K562 (cell line): ENCODE measurements at regions of chr3 and their contacts with region 1.

Region 1: GRCh38 chr3:44913868-44914468 is 39.6 kb downstream of the TGM4 start:
- DNase-seq: peak; percentile 81 to 85 (median 82)
- ATAC-seq: peak; percentile 93
- H3K4me3 ChIP-seq: no peak overlapping the region
- H3K27ac ChIP-seq: no peak overlapping the region
- H3K4me1 ChIP-seq: no peaks in the 10 kb centered on the region
- H3K27me3 ChIP-seq: peaks cover 0 to 5% of the 10 kb centered on the region in 2 experiments; a peak in 1 of 5 replicates
- CTCF ChIP-seq: peak; percentile 88 to 92 (median 90)
- EP300 ChIP-seq: no peak
- POLR2A ChIP-seq: no peak
- RAD21 ChIP-seq: peak; percentile 51 to 87

Region 2: GRCh38 chr3:44529927-44530326 is 384.0 kb before region 1 on chr3:
- CTCF ChIA-PET with region 1: interaction called, 5 read pairs
- POLR2A ChIA-PET with region 1: interaction called, 3 read pairs
- in situ Hi-C with region 1: no loop called
- intact Hi-C with region 1: loop called (anchors 1 kb)
- DNase-seq: peak in 1 of 4 experiments; percentile 37
- ATAC-seq: peak; percentile 76
- H3K4me3 ChIP-seq: no peak overlapping the region
- H3K27ac ChIP-seq: no peak overlapping the region
- H3K4me1 ChIP-seq: peaks cover 0 to 3% of the 10 kb centered on the region in 2 experiments; a peak in 1 of 5 replicates
- H3K27me3 ChIP-seq: peaks cover 0 to 8% of the 10 kb centered on the region in 2 experiments; a peak in 2 of 5 replicates
- CTCF ChIP-seq: peak; percentile 33 to 48 (median 43); a peak in 4 of 6 replicates
- EP300 ChIP-seq: no peak
- POLR2A ChIP-seq: no peak
- RAD21 ChIP-seq: peak in 1 of 2 experiments; percentile 34; a peak in 2 of 4 replicates

Region 3: GRCh38 chr3:44992555-44993470 is 78.8 kb after region 1 on chr3:
- CTCF ChIA-PET with region 1: no interaction called
- POLR2A ChIA-PET with region 1: no interaction called
- in situ Hi-C with region 1: no loop called
- intact Hi-C with region 1: loop called (anchors 1 kb)
- DNase-seq: peak; percentile 62 to 67 (median 64)
- ATAC-seq: peak; percentile 91
- H3K4me3 ChIP-seq: no peak overlapping the region
- H3K27ac ChIP-seq: no peak overlapping the region
- H3K4me1 ChIP-seq: no peaks in the 10 kb centered on the region; a peak in 1 of 5 replicates
- H3K27me3 ChIP-seq: no peaks in the 10 kb centered on the region
- CTCF ChIP-seq: peak; percentile 85 to 98 (median 90)
- EP300 ChIP-seq: no peak
- POLR2A ChIP-seq: no peak
- RAD21 ChIP-seq: peak; percentile 44 to 50

Region 4: GRCh38 chr3:45021148-45021923 is 107.4 kb after region 1 on chr3:
- CTCF ChIA-PET with region 1: no interaction called
- POLR2A ChIA-PET with region 1: no interaction called
- in situ Hi-C with region 1: no loop called
- intact Hi-C with region 1: loop called (anchors 5 kb)
- DNase-seq: no peak
- ATAC-seq: peak; percentile 42; the same call in 1 of the 3 replicates
- H3K4me3 ChIP-seq: no peak overlapping the region
- H3K27ac ChIP-seq: no peak overlapping the region
- H3K4me1 ChIP-seq: peaks cover 4 to 9% of the 10 kb centered on the region in 2 experiments; a peak in 3 of 5 replicates
- H3K27me3 ChIP-seq: no peaks in the 10 kb centered on the region
- CTCF ChIP-seq: no peak
- EP300 ChIP-seq: no peak
- POLR2A ChIP-seq: no peak
- RAD21 ChIP-seq: no peak